Heart left ventricle (tissue), 16 donors: ENCODE measurements at regions of chr3 and their contacts with region 1.

Region 1: GRCh38 chr3:158845765-158846350 is 44.0 kb downstream of the MFSD1 start:
- DNase-seq: no peak
- ATAC-seq: no peak
- H3K4me3 ChIP-seq: no peak overlapping the region
- H3K27ac ChIP-seq: no peak overlapping the region
- H3K4me1 ChIP-seq: no peaks in the 10 kb centered on the region
- H3K27me3 ChIP-seq: no peaks in the 10 kb centered on the region
- CTCF ChIP-seq: peak; percentile 40 to 75 (median 62)
- POLR2A ChIP-seq: no peak

Region 2: DNA sequence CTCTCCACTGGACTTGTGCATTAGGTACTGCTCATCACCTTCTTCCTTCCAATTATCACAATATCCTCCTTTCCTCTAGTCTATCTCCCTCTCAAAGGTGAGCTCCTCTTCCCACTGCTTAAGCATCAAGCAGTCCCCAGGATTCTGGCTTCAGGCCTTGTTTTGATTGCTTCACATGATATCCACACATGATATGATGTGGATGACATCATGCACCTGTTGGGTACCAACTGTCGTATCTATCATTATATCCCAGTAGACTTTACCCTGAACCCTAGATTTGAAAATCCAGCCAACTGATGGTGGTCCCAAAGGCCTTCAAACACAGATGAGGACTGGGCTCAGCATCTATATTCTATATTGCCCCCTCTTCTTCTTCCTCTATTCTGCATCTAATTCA is 60.9 kb after region 1 on chr3:
- intact Hi-C with region 1: no loop called
- DNase-seq: no peak
- ATAC-seq: no peak
- H3K4me3 ChIP-seq: no peak overlapping the region
- H3K27ac ChIP-seq: no peak overlapping the region
- H3K4me1 ChIP-seq: peaks cover 0 to 3% (median 0%) of the 10 kb centered on the region in 12 donors
- H3K27me3 ChIP-seq: no peaks in the 10 kb centered on the region
- CTCF ChIP-seq: no peak
- POLR2A ChIP-seq: no peak

Region 3: DNA sequence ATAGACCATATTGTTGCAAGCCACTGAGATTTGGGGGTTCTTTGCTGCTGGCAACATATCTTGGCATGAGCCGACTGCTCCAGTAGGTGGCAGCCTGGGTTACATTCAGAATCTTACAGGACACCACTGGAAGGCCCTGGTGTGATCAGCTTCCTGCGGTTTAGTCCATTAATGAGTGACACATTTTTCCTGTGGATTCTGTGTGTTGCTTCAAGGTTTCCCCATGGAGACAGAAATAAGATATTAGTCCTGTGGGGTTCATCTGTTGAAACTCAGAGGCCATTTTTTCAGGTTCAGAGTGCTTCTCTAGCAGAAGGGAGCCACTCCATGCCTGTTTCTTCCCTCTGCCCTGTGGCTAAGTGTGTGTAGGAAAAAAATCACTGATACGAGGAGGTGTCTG is 72.2 kb after region 1 on chr3:
- intact Hi-C with region 1: loop called in 1 of 10 experiments (anchors 5 kb)
- DNase-seq: peak in 1 of 5 donors; percentile 38
- ATAC-seq: peak in 3 of 4 donors; percentile 49 to 67 (median 56)
- H3K4me3 ChIP-seq: no peak overlapping the region
- H3K27ac ChIP-seq: no peak overlapping the region
- H3K4me1 ChIP-seq: no peaks in the 10 kb centered on the region
- H3K27me3 ChIP-seq: no peaks in the 10 kb centered on the region
- CTCF ChIP-seq: peak; percentile 9 to 57 (median 43)
- POLR2A ChIP-seq: no peak

Region 4: GRCh38 chr3:159260049-159260662 is 414.3 kb after region 1 on chr3:
- intact Hi-C with region 1: loop called (anchors 1 to 5 kb)
- DNase-seq: peak in 3 of 5 donors; percentile 20 to 32 (median 29)
- ATAC-seq: peak in 1 of 4 donors; percentile 49
- H3K4me3 ChIP-seq: no peak overlapping the region
- H3K27ac ChIP-seq: no peak overlapping the region
- H3K4me1 ChIP-seq: no peaks in the 10 kb centered on the region
- H3K27me3 ChIP-seq: no peaks in the 10 kb centered on the region
- CTCF ChIP-seq: peak; percentile 54 to 81 (median 71)
- POLR2A ChIP-seq: no peak

Region 5: GRCh38 chr3:159813822-159814523 is 968.1 kb after region 1 on chr3:
- intact Hi-C with region 1: loop called in 2 of 10 experiments (anchors 10 kb)
- DNase-seq: no peak
- ATAC-seq: no peak
- H3K4me3 ChIP-seq: no peak overlapping the region
- H3K27ac ChIP-seq: no peak overlapping the region
- H3K4me1 ChIP-seq: peaks cover 0 to 32% (median 18%) of the 10 kb centered on the region in 12 donors
- H3K27me3 ChIP-seq: no peaks in the 10 kb centered on the region
- CTCF ChIP-seq: no peak
- POLR2A ChIP-seq: no peak

Region 6: DNA sequence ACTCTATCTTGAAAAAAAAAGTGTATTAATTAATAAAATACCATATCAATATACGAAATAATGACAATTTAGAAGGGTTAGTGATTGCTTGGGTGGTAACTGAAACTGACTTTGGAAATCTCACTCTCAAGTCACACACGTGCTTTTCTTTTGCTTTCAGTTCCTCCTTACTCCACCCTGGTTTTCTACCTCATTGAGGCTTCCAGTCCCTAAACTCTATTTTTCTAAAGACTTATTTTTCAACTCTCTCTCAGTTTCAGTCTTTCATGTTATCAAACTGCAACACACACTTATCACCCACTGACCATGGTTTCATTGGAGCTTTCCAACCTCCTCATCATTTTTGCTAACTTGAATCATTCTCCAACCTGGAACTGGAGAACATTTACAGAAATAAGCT is 1166.2 kb after region 1 on chr3:
- intact Hi-C with region 1: loop called in 2 of 10 experiments (anchors 10 kb)
- DNase-seq: no peak
- ATAC-seq: no peak
- H3K4me3 ChIP-seq: no peak overlapping the region
- H3K27ac ChIP-seq: no peak overlapping the region
- H3K4me1 ChIP-seq: no peaks in the 10 kb centered on the region
- H3K27me3 ChIP-seq: no peaks in the 10 kb centered on the region
- CTCF ChIP-seq: no peak
- POLR2A ChIP-seq: no peak